GM12878 (cell line): ENCODE measurements at regions of chr4 and their contacts with region 1.

Region 1: DNA sequence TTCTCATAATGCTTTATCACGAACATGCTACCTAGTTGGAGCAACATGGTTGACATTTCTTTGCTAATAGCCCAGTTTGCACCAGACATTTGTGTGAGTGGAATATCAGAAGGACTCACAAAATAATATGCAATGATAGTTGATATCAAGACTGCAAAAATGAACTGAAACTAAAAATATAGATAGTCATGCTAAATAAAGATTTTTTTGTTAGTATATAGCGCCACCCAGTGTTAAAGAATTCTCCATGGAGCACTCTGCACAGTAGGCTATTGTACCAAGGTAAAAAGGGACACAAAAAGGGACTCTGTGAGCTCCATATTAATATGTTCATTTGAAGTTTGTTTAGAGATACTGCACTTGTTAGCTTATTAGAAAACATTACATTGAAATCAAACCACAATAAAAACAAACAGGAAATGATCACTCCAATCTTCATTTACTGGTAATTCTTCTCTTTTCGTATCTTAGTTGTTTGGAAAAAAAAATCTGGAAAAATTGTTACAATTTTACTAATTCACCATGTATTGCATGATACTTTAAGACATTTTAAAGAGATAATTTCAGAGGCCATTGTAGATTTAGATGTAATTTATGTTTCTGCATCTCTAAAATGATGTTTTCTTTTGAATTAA is 1509.6 kb downstream of the ADGRL3 start:
- DNase-seq: no peak
- ATAC-seq: peak; percentile 89
- H3K4me3 ChIP-seq: no peak overlapping the region
- H3K27ac ChIP-seq: no peak overlapping the region
- H3K4me1 ChIP-seq: no peaks in the 10 kb centered on the region
- H3K27me3 ChIP-seq: no peaks in the 10 kb centered on the region
- CTCF ChIP-seq: peak; percentile 27 to 54 (median 33); a peak in 4 of 6 replicates
- EP300 ChIP-seq: no peak
- POLR2A ChIP-seq: no peak
- RAD21 ChIP-seq: peak; percentile 62

Region 2: DNA sequence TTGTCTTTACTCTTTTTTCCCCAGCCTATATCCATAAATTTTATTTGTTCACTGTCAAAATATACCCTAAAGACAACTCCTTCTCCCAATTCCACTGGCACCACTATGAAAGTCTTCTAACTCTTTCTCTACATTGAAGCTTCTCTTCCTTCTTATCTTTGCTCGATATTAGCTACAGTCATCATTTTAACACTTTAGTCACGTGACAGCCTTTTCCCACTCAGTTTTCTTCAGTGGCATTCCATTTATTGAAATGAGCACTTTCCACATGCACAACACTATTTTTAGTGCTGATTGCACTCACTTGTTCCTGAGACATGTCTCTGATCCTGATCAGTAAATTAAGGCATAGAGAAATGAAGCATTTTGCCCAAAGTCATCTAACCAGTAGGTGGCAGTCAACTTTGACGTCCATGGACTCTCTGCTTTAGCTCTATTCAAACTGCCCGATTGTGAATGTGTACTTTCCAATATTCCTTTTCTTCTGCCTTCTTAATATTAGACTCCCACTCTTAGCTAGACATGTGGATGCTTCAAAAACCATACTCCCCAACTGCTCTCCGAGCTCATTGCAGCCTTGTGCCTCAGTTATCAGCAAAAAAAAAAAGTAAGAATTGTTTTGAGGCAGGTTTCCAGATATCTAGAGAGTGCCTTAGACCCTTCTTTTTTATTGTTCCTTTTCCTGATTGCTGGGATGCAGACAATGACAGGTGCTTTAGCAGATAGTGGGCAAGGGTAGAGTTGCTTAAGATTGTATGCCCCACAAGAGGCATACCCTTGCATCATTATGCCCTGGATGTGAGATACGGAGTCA is 1904.0 kb before region 1 on chr4:
- CTCF ChIA-PET with region 1: interaction called, 5 read pairs
- POLR2A ChIA-PET with region 1: no interaction called
- RAD21 ChIA-PET with region 1: no interaction called
- SMC1A ChIA-PET with region 1: no interaction called
- in situ Hi-C with region 1: no loop called
- intact Hi-C with region 1: loop called (anchors 10 kb)
- DNase-seq: no peak
- ATAC-seq: peak; percentile 85
- H3K4me3 ChIP-seq: no peak overlapping the region
- H3K27ac ChIP-seq: no peak overlapping the region
- H3K4me1 ChIP-seq: no peaks in the 10 kb centered on the region
- H3K27me3 ChIP-seq: no peaks in the 10 kb centered on the region
- CTCF ChIP-seq: peak; percentile 39 to 59 (median 55); a peak in 4 of 6 replicates
- EP300 ChIP-seq: no peak
- POLR2A ChIP-seq: no peak
- RAD21 ChIP-seq: peak; percentile 39

Region 3: GRCh38 chr4:62548108-62548524 is 161.6 kb before region 1 on chr4:
- CTCF ChIA-PET with region 1: no interaction called
- POLR2A ChIA-PET with region 1: no interaction called
- RAD21 ChIA-PET with region 1: no interaction called
- SMC1A ChIA-PET with region 1: no interaction called
- in situ Hi-C with region 1: no loop called
- intact Hi-C with region 1: no loop called
- DNase-seq: no peak
- ATAC-seq: peak; percentile 34; the same call in 2 of the 3 replicates
- H3K4me3 ChIP-seq: no peak overlapping the region
- H3K27ac ChIP-seq: no peak overlapping the region
- H3K4me1 ChIP-seq: no peaks in the 10 kb centered on the region
- H3K27me3 ChIP-seq: no peaks in the 10 kb centered on the region
- CTCF ChIP-seq: no peak
- EP300 ChIP-seq: no peak
- POLR2A ChIP-seq: no peak
- RAD21 ChIP-seq: no peak

Region 4: DNA sequence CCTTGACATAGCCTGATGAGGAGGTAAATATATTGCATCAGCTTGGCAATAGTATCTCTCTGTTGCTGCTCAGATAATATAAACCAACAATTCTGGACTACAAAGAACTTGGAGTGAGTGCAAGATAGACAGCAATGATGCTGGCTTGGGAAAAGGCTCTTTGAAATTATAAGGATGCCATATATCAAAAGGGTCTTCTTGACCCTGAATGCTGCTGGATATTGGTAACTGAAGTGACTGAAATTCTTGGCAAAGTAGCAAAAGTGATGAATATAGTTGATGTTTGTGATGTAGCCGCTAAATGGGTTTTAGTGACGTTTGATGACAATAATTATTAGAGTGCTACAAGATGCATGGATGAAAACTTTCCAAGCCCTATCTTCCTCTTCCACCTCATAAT is 118.0 kb before region 1 on chr4:
- CTCF ChIA-PET with region 1: interaction called, 6 read pairs
- POLR2A ChIA-PET with region 1: no interaction called
- RAD21 ChIA-PET with region 1: interaction called, 4 read pairs
- SMC1A ChIA-PET with region 1: no interaction called
- in situ Hi-C with region 1: no loop called
- intact Hi-C with region 1: loop called (anchors 2 kb)
- DNase-seq: no peak
- ATAC-seq: no peak
- H3K4me3 ChIP-seq: no peak overlapping the region
- H3K27ac ChIP-seq: no peak overlapping the region
- H3K4me1 ChIP-seq: no peaks in the 10 kb centered on the region
- H3K27me3 ChIP-seq: no peaks in the 10 kb centered on the region
- CTCF ChIP-seq: no peak
- EP300 ChIP-seq: no peak
- POLR2A ChIP-seq: no peak
- RAD21 ChIP-seq: no peak

Region 5: GRCh38 chr4:62627141-62627540 is 82.6 kb before region 1 on chr4:
- CTCF ChIA-PET with region 1: no interaction called
- POLR2A ChIA-PET with region 1: no interaction called
- RAD21 ChIA-PET with region 1: no interaction called
- SMC1A ChIA-PET with region 1: no interaction called
- in situ Hi-C with region 1: no loop called
- intact Hi-C with region 1: no loop called
- DNase-seq: no peak
- ATAC-seq: no peak
- H3K4me3 ChIP-seq: no peak overlapping the region
- H3K27ac ChIP-seq: no peak overlapping the region
- H3K4me1 ChIP-seq: no peaks in the 10 kb centered on the region
- H3K27me3 ChIP-seq: no peaks in the 10 kb centered on the region
- CTCF ChIP-seq: no peak
- EP300 ChIP-seq: no peak
- POLR2A ChIP-seq: no peak
- RAD21 ChIP-seq: no peak

Region 6: GRCh38 chr4:62656006-62656405 is 53.7 kb before region 1 on chr4:
- CTCF ChIA-PET with region 1: no interaction called
- POLR2A ChIA-PET with region 1: no interaction called
- RAD21 ChIA-PET with region 1: no interaction called
- SMC1A ChIA-PET with region 1: no interaction called
- in situ Hi-C with region 1: no loop called
- intact Hi-C with region 1: no loop called
- DNase-seq: no peak
- ATAC-seq: no peak
- H3K4me3 ChIP-seq: no peak overlapping the region
- H3K27ac ChIP-seq: no peak overlapping the region
- H3K4me1 ChIP-seq: no peaks in the 10 kb centered on the region
- H3K27me3 ChIP-seq: no peaks in the 10 kb centered on the region
- CTCF ChIP-seq: no peak
- EP300 ChIP-seq: no peak
- POLR2A ChIP-seq: no peak
- RAD21 ChIP-seq: no peak